Calu3 (cell line): ENCODE measurements at regions of chr19 and their contacts with region 1.

Region 1: DNA sequence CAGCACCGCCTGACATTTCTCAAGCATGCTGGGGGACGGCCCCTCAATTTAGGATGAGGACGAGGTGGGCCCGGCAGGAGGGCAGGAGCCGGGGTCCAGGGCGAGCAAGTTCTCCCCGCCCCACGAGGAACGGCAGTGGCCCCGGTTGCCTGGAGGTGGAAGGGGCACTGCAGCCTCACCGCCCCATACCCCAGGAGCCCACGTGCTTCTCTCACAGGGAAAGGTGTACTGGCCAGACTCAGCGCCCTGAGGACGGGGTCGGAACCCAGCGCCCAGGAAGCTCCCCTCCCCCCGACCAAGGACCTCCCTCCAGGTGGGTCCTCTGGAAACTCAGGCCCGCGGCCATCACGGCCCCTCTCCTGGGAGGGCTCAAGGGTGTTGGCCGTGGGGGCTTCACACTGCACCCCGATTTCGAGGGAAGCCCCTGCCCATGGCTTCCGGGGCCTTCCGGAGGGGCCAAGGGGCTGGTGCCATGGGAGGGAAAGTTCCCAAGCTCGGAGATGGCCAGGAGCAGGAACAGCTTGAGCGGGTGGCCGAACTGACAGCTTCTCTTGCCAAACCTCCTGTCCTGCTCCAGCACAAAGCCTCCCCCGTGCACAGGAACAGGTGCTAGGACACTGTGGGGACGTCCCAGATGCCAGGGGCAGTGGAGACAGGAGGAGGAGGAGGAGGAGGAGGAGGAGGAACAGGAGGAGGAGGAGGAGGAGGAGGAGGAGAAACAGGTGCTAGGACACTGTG is 10.2 kb downstream of the SBNO2 start:
- DNase-seq: no peak
- H3K4me3 Mint-ChIP-seq: no peak overlapping the region
- H3K27ac Mint-ChIP-seq: no peak overlapping the region
- H3K4me1 Mint-ChIP-seq: peaks cover 13% of the 10 kb centered on the region
- H3K27me3 Mint-ChIP-seq: no peaks in the 10 kb centered on the region
- CTCF ChIP-seq: no peak

Region 2: DNA sequence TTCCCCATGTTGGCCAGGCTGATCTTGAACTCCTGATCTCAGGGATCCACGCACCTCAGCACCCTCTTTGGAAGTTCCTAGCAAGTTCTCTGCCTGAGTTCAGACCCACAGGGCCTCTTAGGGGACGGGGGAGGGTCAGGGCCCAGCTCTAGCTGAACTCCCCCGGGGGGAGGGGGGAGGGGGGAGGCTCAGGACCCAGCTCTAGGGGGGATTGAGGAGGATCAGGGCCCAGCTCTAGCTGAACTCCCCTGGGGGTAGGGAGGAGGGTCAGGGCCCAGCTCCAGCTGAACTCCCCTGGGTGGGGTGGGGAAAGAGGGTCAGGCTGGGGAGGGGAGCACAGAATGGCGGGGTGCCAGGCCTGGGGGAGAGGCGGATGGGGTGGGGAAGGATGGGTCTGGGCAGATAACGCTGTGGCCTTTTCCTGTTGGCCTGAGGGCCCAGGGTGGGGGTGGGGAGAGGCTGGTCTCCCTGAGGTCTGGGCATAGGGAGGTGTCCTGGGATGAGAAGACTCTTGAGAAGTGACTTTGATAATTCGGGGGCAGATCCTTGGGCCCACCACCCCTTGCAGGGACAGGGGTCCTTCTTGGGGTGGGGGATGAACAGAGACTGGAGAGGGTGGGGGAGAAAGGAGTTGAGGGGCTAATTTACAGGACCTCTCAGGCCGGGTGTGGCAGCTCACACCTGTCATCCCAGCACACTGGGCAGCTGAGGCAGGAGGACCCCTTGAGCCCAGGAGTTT is 372.2 kb before region 1 on chr19:
- CTCF ChIA-PET with region 1: interaction called, 10 read pairs
- intact Hi-C with region 1: no loop called
- DNase-seq: no peak
- H3K4me3 Mint-ChIP-seq: no peak overlapping the region
- H3K27ac Mint-ChIP-seq: no peak overlapping the region
- H3K4me1 Mint-ChIP-seq: no peaks in the 10 kb centered on the region
- H3K27me3 Mint-ChIP-seq: no peaks in the 10 kb centered on the region
- CTCF ChIP-seq: no peak

Region 3: GRCh38 chr19:1223018-1223855 is 59.3 kb after region 1 on chr19:
- CTCF ChIA-PET with region 1: no interaction called
- intact Hi-C with region 1: no loop called
- DNase-seq: peak; percentile 53
- H3K4me3 Mint-ChIP-seq: no peak overlapping the region
- H3K27ac Mint-ChIP-seq: no peak overlapping the region
- H3K4me1 Mint-ChIP-seq: no peaks in the 10 kb centered on the region
- H3K27me3 Mint-ChIP-seq: no peaks in the 10 kb centered on the region
- CTCF ChIP-seq: no peak

Region 4: DNA sequence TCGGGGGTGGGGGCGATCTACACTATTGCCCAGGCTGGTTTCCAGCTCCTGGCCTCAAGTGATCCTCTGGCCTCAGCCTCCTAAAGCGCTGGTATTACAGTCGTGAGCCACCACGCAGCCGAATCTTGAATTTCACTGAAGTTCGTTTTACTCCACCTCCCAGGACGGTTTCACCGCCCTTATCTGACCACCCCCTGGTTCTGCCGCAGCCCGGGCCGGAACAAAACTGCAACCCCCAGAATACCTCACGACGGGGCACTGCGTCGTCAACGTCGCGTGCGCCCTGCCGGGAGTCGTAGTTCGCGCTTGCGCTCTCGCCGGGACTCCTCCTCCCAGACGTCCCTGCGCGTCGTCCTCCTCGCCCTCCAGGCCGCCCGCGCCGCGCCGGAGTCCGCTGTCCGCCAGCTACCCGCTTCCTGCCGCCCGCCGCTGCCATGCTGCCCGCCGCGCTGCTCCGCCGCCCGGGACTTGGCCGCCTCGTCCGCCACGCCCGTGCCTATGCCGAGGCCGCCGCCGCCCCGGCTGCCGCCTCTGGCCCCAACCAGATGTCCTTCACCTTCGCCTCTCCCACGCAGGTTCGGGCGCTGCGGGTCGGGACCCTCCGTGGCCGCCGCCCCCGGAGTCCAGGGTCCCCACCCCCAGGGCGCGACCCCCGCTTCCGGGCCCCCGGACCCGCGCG is 77.7 kb after region 1 on chr19 and contains the start of gene ATP5F1D:
- CTCF ChIA-PET with region 1: no interaction called
- intact Hi-C with region 1: no loop called
- DNase-seq: peak; percentile 87
- H3K4me3 Mint-ChIP-seq: peak within 1 kb of the TSS; percentile 75
- H3K27ac Mint-ChIP-seq: peak within 1 kb of the TSS; percentile 74
- H3K4me1 Mint-ChIP-seq: peaks cover 24% of the 10 kb centered on the region
- H3K27me3 Mint-ChIP-seq: no peaks in the 10 kb centered on the region
- CTCF ChIP-seq: no peak
- total RNA-seq, gene ATP5F1D: 86.6 and 91.8 TPM in 2 replicates